Natural killer cell (primary cell): ENCODE measurements at regions of chr4 and their contacts with region 1.

Region 1: GRCh38 chr4:7649741-7650531 is 215.2 kb upstream of the PSAPL1 start:
- DNase-seq: peak; percentile 78 to 83
- ATAC-seq: peak; percentile 67 to 82 (median 74)
- H3K4me3 ChIP-seq: no peak overlapping the region
- H3K4me3 Mint-ChIP-seq: peak overlapping the region; percentile 59
- H3K27ac ChIP-seq: peak overlapping the region; percentile 94
- H3K27ac Mint-ChIP-seq: peak overlapping the region; percentile 98 to 99
- H3K4me1 ChIP-seq: peaks cover 100% of the 10 kb centered on the region
- H3K4me1 Mint-ChIP-seq: peaks cover 76 to 97% of the 10 kb centered on the region in 2 donors
- H3K27me3 ChIP-seq: no peaks in the 10 kb centered on the region
- H3K27me3 Mint-ChIP-seq: no peaks in the 10 kb centered on the region
- CTCF ChIP-seq: no peak

Region 2: GRCh38 chr4:7324651-7325121 is 325.2 kb before region 1 on chr4:
- intact Hi-C with region 1: loop called (anchors 1 kb)
- DNase-seq: peak; percentile 63 to 78
- ATAC-seq: peak; percentile 75 to 86 (median 81)
- H3K4me3 ChIP-seq: no peak overlapping the region
- H3K4me3 Mint-ChIP-seq: peak overlapping the region; percentile 78
- H3K27ac ChIP-seq: no peak overlapping the region
- H3K27ac Mint-ChIP-seq: peak overlapping the region; percentile 68 to 83
- H3K4me1 ChIP-seq: peaks cover 41% of the 10 kb centered on the region
- H3K4me1 Mint-ChIP-seq: peaks cover 23 to 39% of the 10 kb centered on the region in 2 donors
- H3K27me3 ChIP-seq: no peaks in the 10 kb centered on the region
- H3K27me3 Mint-ChIP-seq: peaks cover 19 to 21% of the 10 kb centered on the region in 2 donors
- CTCF ChIP-seq: no peak

Region 3: DNA sequence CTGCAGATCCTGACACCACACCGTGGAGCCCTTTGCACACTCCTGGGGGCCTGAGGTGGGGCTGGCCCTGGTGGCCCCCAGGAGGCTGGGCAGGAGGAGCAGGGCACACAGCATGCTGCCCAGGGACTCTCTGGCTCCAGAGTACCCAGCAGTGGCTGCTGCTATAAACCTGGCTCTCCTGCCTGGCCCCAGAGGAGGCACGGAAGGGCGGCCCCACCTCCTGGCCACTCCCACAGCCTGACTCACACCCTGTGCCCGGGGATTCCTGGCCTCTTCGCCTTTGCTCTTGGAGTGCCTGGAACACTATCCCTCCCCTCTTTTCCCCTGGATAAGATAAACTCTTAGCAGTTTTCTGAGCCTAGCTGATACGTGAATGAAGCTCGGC is 215.2 kb before region 1 on chr4 and contains the start of gene PSAPL1:
- intact Hi-C with region 1: loop called (anchors 1 kb)
- DNase-seq: no peak
- ATAC-seq: peak in 2 of 3 donors; percentile 33 to 54
- H3K4me3 ChIP-seq: no peak within 1 kb of the TSS
- H3K4me3 Mint-ChIP-seq: peak within 1 kb of the TSS; percentile 74
- H3K27ac ChIP-seq: no peak within 1 kb of the TSS
- H3K27ac Mint-ChIP-seq: peak within 1 kb of the TSS; percentile 64 to 78
- H3K4me1 ChIP-seq: peaks cover 28% of the 10 kb centered on the region
- H3K4me1 Mint-ChIP-seq: peaks cover 15 to 21% of the 10 kb centered on the region in 2 donors
- H3K27me3 ChIP-seq: peaks cover 18% of the 10 kb centered on the region
- H3K27me3 Mint-ChIP-seq: peaks cover 41 to 48% of the 10 kb centered on the region in 2 donors
- CTCF ChIP-seq: no peak
- total RNA-seq, gene PSAPL1: not detected

Region 4: DNA sequence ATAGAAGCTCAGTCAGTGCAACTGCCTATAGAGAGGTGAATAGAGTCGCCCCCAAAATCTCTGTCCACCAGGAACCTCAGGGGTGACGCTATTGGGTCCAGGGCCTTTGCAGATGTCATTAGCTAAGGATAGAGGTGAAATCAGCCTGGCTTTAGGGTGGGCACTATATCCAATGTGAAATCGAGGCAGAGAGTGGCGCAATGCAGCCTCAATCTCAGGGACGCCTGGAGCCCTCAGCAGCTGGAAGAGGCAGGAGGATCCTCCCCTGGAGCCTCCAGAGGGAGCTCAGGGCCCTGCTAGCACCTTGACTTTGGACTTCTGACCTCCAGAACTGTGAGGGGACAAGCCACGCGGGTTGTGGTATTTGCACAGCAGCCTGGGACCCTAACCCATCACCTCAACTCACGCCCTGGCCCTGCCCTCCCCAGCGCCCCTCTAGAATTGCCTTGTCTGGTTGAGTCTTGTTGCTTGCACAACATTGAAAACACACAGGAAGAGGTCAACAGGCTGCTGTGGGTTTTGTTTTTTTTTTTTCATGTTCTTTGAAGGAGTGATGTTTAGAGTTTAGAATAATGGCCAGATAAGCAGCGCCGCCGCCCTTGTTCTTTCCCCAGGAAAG is 125.8 kb before region 1 on chr4:
- intact Hi-C with region 1: loop called (anchors 5 kb)
- DNase-seq: no peak
- ATAC-seq: peak; percentile 53 to 81 (median 76)
- H3K4me3 ChIP-seq: no peak overlapping the region
- H3K4me3 Mint-ChIP-seq: peak overlapping the region; percentile 87
- H3K27ac ChIP-seq: no peak overlapping the region
- H3K27ac Mint-ChIP-seq: peak overlapping the region; percentile 69 to 86
- H3K4me1 ChIP-seq: peaks cover 61% of the 10 kb centered on the region
- H3K4me1 Mint-ChIP-seq: peaks cover 66 to 89% of the 10 kb centered on the region in 2 donors
- H3K27me3 ChIP-seq: no peaks in the 10 kb centered on the region
- H3K27me3 Mint-ChIP-seq: no peaks in the 10 kb centered on the region
- CTCF ChIP-seq: no peak

Region 5: GRCh38 chr4:7539659-7540058 is 110.3 kb before region 1 on chr4:
- intact Hi-C with region 1: loop called (anchors 1 kb)
- DNase-seq: peak; percentile 72 to 77
- ATAC-seq: peak; percentile 92 to 94 (median 92)
- H3K4me3 ChIP-seq: no peak overlapping the region
- H3K4me3 Mint-ChIP-seq: no peak overlapping the region
- H3K27ac ChIP-seq: peak overlapping the region; percentile 49
- H3K27ac Mint-ChIP-seq: peak overlapping the region in 1 of 2 donors; percentile 90
- H3K4me1 ChIP-seq: peaks cover 15% of the 10 kb centered on the region
- H3K4me1 Mint-ChIP-seq: peaks cover 0 to 33% of the 10 kb centered on the region in 2 donors
- H3K27me3 ChIP-seq: no peaks in the 10 kb centered on the region
- H3K27me3 Mint-ChIP-seq: no peaks in the 10 kb centered on the region
- CTCF ChIP-seq: no peak

Region 6: DNA sequence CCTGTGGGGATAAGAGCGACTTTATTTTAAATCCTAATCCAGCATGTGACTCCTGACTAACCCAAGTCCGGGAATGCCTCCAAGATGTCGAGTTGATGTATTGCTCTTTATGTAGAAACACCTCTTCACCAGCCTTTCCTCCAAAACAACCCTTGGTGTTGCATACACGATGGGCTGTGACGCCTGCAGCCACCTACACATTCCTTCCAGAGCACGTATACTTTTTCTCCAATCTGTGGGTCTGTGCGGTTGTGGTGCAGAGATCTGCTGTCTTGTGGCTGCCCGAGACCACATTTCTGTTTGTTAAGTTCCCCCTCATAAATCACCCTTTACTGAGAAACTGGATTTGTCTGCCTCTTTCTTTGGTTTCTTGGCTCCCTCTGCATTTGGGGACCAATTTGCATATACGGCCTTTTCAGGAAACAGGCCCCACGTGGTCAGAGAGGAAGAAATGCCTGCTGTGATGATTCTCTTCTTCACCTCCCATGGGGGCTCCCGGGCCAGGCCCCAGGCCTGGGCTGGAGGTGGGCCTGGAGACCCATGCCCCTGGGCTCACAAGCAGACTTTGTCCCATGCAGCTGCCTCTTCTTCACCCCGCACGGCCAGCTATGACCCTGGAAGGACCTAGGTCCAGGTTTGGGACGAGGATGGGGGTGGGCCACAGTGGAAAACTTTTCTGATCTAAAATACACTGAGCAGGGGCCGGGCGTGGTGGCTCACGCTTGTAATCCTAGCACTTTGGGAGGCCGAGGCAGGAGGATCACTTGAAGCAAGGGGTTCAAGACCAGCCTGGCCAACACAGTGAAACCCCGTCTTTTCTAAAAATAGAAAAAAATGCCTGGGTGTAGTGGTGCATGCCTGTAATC is 311.1 kb after region 1 on chr4:
- intact Hi-C with region 1: loop called (anchors 5 kb)
- DNase-seq: peak in 1 of 2 donors; percentile 63
- ATAC-seq: peak in 1 of 3 donors; percentile 25
- H3K4me3 ChIP-seq: no peak overlapping the region
- H3K4me3 Mint-ChIP-seq: peak overlapping the region; percentile 66
- H3K27ac ChIP-seq: no peak overlapping the region
- H3K27ac Mint-ChIP-seq: peak overlapping the region in 1 of 2 donors; percentile 75
- H3K4me1 ChIP-seq: peaks cover 36% of the 10 kb centered on the region
- H3K4me1 Mint-ChIP-seq: peaks cover 28 to 45% of the 10 kb centered on the region in 2 donors
- H3K27me3 ChIP-seq: no peaks in the 10 kb centered on the region
- H3K27me3 Mint-ChIP-seq: peaks cover 6 to 19% of the 10 kb centered on the region in 2 donors
- CTCF ChIP-seq: no peak